MCF 10A (cell line): ENCODE measurements at regions of chr12 and their contacts with region 1.

Region 1: DNA sequence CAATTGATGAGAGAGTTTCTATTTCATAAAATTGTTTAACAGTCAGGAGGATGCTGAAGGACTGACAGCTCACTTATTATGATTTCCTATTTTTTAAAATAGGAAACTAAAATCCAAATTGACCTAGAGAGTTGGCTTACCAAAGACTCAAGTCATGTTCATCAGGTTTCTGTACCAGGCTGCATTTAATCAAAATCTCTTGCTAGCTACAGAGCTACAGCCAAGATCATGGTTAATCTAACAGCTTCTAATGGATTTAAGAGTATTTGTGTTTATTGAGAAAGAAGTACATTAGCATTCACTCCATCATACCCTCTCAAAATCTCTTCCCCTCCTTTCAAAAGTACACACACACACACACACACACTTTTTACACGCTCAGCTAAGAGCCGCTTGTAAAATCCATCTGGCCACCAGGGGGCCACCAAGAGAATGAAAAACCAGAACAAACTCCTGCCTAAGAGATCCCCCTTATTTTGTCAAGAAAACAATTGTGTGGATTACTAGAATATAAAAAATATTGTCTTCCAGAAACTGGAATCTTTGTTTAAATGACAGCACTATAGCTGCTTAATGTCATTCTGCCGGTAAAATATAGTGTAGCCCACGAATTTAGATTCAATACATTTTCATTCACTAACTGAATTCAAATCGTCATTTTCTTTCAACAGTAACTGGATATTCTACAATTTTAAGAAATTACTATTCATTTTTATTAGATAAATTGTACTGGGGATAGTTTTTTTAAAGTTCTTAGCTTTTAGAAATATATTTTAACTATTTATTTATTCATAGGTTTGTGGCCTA is 334.0 kb downstream of the BTG1 start:
- DNase-seq: peak; percentile 61
- H3K4me3 Mint-ChIP-seq: no peak overlapping the region
- H3K27ac Mint-ChIP-seq: peak overlapping the region; percentile 43
- H3K4me1 Mint-ChIP-seq: peaks cover 11% of the 10 kb centered on the region
- H3K27me3 Mint-ChIP-seq: no peaks in the 10 kb centered on the region
- CTCF ChIP-seq: peak; percentile 57

Region 2: GRCh38 chr12:91577586-91578539 is 233.8 kb before region 1 on chr12:
- CTCF ChIA-PET with region 1: interaction called, 5 read pairs
- POLR2A ChIA-PET with region 1: interaction called, 26 read pairs
- intact Hi-C with region 1: loop called (anchors 5 kb)
- DNase-seq: peak; percentile 32
- H3K4me3 Mint-ChIP-seq: peak overlapping the region; percentile 57
- H3K27ac Mint-ChIP-seq: peak overlapping the region; percentile 85
- H3K4me1 Mint-ChIP-seq: peaks cover 20% of the 10 kb centered on the region
- H3K27me3 Mint-ChIP-seq: no peaks in the 10 kb centered on the region
- CTCF ChIP-seq: peak; percentile 52

Region 3: DNA sequence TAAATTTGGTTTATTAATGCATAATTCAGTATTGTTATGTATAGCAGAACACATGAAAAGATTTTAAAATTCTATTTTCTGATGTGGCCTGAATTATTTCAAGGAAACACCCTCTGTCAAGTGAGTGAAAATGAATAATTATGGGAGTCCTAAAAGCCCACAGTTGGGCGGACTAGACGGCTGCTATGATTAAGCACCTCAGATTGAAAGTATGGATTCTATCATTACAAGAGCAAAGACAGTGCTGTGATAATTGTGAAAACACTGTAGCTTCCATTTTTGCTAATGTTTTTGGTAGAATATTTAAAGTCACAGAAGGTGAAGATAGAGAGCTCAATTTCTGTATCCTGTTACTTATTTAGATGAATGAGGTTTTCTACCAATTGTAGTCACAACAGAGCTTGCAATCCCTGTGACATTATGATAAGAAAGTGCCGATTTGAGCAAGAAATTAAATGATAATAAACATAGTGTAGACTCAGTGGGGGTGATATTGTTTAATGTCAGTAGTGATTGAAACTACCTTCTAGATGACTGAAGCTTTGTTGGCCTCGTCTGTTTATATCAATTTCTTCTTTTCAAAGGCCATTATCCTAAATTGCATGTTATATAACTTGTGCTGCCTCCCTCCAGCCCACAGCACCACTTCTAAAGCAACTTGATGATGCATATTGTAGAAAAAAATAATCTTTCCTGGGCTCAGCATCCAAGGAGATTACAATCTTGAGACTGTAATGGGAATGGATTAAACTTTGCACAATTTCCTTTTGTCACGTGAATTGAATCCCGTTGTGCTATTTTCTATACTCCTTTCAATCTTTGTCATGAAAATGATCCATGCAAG is 25.8 kb before region 1 on chr12:
- CTCF ChIA-PET with region 1: interaction called, 15 read pairs
- POLR2A ChIA-PET with region 1: interaction called, 107 read pairs
- intact Hi-C with region 1: no loop called
- DNase-seq: no peak
- H3K4me3 Mint-ChIP-seq: no peak overlapping the region
- H3K27ac Mint-ChIP-seq: no peak overlapping the region
- H3K4me1 Mint-ChIP-seq: no peaks in the 10 kb centered on the region
- H3K27me3 Mint-ChIP-seq: no peaks in the 10 kb centered on the region
- CTCF ChIP-seq: no peak

Region 4: GRCh38 chr12:91833780-91834359 is 22.2 kb after region 1 on chr12:
- CTCF ChIA-PET with region 1: interaction called, 17 read pairs
- POLR2A ChIA-PET with region 1: no interaction called
- intact Hi-C with region 1: no loop called
- DNase-seq: no peak
- H3K4me3 Mint-ChIP-seq: no peak overlapping the region
- H3K27ac Mint-ChIP-seq: no peak overlapping the region
- H3K4me1 Mint-ChIP-seq: no peaks in the 10 kb centered on the region
- H3K27me3 Mint-ChIP-seq: no peaks in the 10 kb centered on the region
- CTCF ChIP-seq: no peak